ENCODE measurements at regions of chr20 and their contacts with region 1.

Region 1: DNA sequence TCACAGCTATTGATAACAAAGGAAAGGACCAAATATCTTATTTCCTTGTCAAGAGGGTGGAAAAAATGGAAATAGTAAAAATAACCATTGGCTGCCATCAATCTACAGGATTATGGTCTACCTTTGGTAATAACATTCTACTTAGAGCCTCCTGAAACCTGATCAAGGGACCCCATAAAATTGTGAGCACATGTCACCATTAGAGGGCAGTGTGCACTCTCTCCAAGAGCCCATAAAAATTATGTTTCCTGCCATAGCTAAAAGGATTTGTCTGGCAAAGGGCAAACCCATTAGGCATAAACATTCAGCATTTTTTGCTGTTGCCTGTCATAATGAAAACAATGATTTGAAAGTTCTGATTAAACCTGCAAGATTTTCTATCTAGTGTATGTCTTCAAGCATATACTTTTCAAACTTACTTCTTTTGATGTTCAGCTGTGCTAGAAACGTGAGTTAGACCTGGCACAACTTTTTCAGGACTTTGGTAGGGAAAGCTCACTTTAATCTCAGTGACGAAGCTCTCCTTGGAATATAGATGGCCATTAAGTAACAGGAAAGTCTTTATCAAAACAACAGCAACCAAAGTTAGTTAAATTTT is 120.7 kb upstream of the ZFP64 start:
- DNase-seq: peak; percentile 79
- H3K4me3 Mint-ChIP-seq: no peak overlapping the region
- H3K27ac Mint-ChIP-seq: no peak overlapping the region
- H3K4me1 Mint-ChIP-seq: peaks cover 28% of the 10 kb centered on the region
- H3K27me3 Mint-ChIP-seq: no peaks in the 10 kb centered on the region

Region 2: GRCh38 chr20:52361650-52362049 is 49.4 kb after region 1 on chr20:
- CTCF ChIA-PET with region 1: interaction called, 5 read pairs
- intact Hi-C with region 1: loop called (anchors 1 kb)
- DNase-seq: no peak
- H3K4me3 Mint-ChIP-seq: no peak overlapping the region
- H3K27ac Mint-ChIP-seq: no peak overlapping the region
- H3K4me1 Mint-ChIP-seq: peaks cover 16% of the 10 kb centered on the region
- H3K27me3 Mint-ChIP-seq: no peaks in the 10 kb centered on the region

Region 3: DNA sequence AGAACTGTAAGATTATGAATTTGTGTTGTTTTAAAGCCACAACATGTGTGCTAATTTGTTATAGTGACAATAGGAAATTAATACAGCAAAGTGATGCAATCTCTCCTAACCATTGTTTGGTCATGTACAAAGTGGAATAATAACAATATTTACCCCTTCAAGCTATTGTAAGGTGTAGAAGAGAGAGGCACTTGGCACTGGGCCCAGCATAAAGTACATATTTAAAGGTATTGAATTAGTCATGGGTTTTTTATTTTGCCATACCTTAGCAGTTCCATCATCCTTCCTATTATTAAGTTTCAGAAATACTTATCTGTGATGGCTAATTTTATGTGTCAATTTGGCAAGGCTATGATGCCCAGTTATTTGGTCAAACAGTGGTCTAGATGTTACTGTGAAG is 337.5 kb after region 1 on chr20:
- CTCF ChIA-PET with region 1: no interaction called
- intact Hi-C with region 1: loop called (anchors 10 kb)
- DNase-seq: no peak
- H3K4me3 Mint-ChIP-seq: no peak overlapping the region
- H3K27ac Mint-ChIP-seq: no peak overlapping the region
- H3K4me1 Mint-ChIP-seq: peaks cover 9% of the 10 kb centered on the region
- H3K27me3 Mint-ChIP-seq: no peaks in the 10 kb centered on the region

Region 4: GRCh38 chr20:53032478-53032932 is 720.3 kb after region 1 on chr20:
- CTCF ChIA-PET with region 1: no interaction called
- intact Hi-C with region 1: loop called (anchors 1 kb)
- DNase-seq: no peak
- H3K4me3 Mint-ChIP-seq: no peak overlapping the region
- H3K27ac Mint-ChIP-seq: no peak overlapping the region
- H3K4me1 Mint-ChIP-seq: peaks cover 70% of the 10 kb centered on the region
- H3K27me3 Mint-ChIP-seq: no peaks in the 10 kb centered on the region

Region 5: DNA sequence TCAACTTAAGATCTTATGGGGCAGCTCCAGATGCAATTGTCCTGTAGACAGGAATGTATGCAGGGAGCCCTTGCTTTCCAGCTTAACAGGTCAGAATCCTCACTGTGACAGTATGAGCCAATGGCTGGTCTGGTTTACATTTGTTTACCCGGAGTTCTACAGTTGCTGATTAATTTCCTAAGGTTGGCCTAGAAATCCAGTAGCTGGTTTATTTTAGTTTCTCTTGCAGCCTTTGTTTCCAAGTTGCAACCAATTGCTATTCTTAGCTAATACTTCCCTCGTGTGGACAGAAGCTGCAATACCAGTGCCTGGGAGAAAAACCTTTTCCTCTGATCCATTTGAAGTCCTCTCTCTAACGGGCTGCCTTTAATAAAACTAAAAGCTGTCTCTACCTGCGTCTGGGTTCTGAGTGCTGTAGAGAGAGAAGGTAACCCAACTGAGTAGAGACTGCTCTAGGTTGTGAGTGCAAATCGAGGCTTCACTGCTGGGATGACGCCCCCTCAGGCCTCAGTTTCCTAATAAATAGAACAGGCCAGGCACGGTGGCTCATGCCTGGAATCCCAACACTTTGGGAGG is 1235.5 kb after region 1 on chr20:
- CTCF ChIA-PET with region 1: interaction called, 10 read pairs
- intact Hi-C with region 1: loop called (anchors 1 kb)
- DNase-seq: peak; percentile 70
- H3K4me3 Mint-ChIP-seq: no peak overlapping the region
- H3K27ac Mint-ChIP-seq: no peak overlapping the region
- H3K4me1 Mint-ChIP-seq: peaks cover 2% of the 10 kb centered on the region
- H3K27me3 Mint-ChIP-seq: no peaks in the 10 kb centered on the region